Heart left ventricle (tissue), 16 donors: ENCODE measurements at regions of chr18 and their contacts with region 1.

Region 1: GRCh38 chr18:73739098-73739497 is 408.5 kb downstream of the FBXO15 start:
- DNase-seq: no peak
- ATAC-seq: no peak
- H3K4me3 ChIP-seq: no peak overlapping the region
- H3K27ac ChIP-seq: no peak overlapping the region
- H3K4me1 ChIP-seq: peaks cover 0 to 10% (median 0%) of the 10 kb centered on the region in 12 donors
- H3K27me3 ChIP-seq: no peaks in the 10 kb centered on the region
- CTCF ChIP-seq: no peak
- POLR2A ChIP-seq: no peak

Region 2: DNA sequence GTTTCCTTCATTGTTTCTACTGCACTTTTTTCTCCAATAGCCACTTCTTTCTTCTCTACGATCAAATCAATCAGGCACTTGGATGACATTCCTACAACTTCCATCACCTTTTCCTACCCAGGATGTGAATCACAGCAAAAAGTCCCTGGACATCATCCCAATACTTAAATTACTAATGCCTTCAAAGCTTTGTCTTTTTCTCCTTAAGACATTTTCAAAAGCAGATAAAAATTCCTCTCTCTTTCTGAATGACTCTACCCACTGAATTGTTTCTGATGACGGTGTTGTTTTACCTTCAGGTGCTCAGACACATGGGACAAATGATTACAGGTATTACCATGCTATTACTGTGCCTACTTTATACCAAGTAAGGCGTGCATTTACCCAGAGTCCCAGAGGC is 92.3 kb before region 1 on chr18:
- intact Hi-C with region 1: loop called in 1 of 10 experiments (anchors 5 kb)
- DNase-seq: no peak
- ATAC-seq: no peak
- H3K4me3 ChIP-seq: no peak overlapping the region
- H3K27ac ChIP-seq: peak overlapping the region in 1 of 12 donors; percentile 35
- H3K4me1 ChIP-seq: no peaks in the 10 kb centered on the region
- H3K27me3 ChIP-seq: no peaks in the 10 kb centered on the region
- CTCF ChIP-seq: no peak
- POLR2A ChIP-seq: no peak